AG04450 (cell line): ENCODE measurements at regions of chr1 and their contacts with region 1.

Region 1: DNA sequence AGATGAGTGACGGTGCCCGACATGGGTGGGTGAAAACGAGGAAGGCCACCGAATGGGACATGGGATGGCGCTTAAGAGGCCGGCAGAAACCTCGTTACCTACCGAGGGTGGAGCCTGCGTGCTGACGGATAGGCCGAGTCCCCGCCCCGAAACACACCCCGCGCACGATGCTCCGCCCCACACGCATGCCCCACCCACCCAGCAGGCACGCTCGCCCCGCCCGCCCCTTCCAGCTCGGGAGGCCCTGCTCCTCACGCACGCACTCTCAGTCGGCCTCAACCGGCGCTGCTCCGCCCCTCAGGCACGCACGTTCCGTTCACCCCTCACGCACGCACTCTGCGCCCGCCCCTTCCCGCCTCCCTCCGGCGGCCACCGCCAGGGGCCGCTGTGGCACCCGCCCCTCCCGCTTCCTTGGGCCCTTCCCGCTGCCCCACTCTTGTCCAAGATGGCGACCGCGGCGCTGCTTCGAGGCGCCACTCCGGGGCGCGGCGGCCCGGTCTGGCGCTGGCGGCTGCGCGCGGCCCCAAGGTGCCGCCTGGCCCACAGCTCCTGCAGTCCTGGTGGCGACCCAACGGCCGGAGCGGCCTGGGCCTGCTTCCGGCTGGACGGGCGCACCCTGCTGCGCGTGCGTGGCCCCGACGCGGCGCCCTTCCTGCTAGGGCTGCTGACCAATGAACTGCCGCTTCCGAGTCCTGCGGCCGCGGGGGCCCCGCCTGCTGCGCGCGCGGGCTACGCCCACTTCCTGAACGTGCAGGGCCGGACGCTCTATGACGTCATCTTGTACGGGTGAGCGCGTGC is at the start of gene IBA57:
- DNase-seq: peak; percentile 97
- H3K4me3 ChIP-seq: peak within 1 kb of the TSS; percentile 75
- H3K27ac ChIP-seq: peak within 1 kb of the TSS; percentile 81
- H3K27me3 ChIP-seq: no peaks in the 10 kb centered on the region
- CTCF ChIP-seq: peak; percentile 83
- polyA plus RNA-seq, gene IBA57: 1.4 and 1.7 TPM in 2 replicates

Region 2: GRCh38 chr1:228139944-228140656 is 25.5 kb before region 1 on chr1 and contains the start of gene GUK1:
- CTCF ChIA-PET with region 1: interaction called, 7 read pairs
- POLR2A ChIA-PET with region 1: interaction called, 11 read pairs
- DNase-seq: peak; percentile 97
- H3K4me3 ChIP-seq: peak within 1 kb of the TSS; percentile 90
- H3K27ac ChIP-seq: peak within 1 kb of the TSS; percentile 82
- H3K27me3 ChIP-seq: peaks cover 18% of the 10 kb centered on the region
- CTCF ChIP-seq: peak; percentile 23; the same call in 1 of the 2 replicates
- polyA plus RNA-seq, gene GUK1: 177 and 230 TPM in 2 replicates

Region 3: GRCh38 chr1:228150461-228151179 is 15.0 kb before region 1 on chr1:
- CTCF ChIA-PET with region 1: interaction called, 26 read pairs
- POLR2A ChIA-PET with region 1: interaction called, 15 read pairs
- DNase-seq: peak; percentile 65
- H3K4me3 ChIP-seq: peak overlapping the region; percentile 39
- H3K27ac ChIP-seq: peak overlapping the region; percentile 84
- H3K27me3 ChIP-seq: no peaks in the 10 kb centered on the region
- CTCF ChIP-seq: no peak

Region 4: DNA sequence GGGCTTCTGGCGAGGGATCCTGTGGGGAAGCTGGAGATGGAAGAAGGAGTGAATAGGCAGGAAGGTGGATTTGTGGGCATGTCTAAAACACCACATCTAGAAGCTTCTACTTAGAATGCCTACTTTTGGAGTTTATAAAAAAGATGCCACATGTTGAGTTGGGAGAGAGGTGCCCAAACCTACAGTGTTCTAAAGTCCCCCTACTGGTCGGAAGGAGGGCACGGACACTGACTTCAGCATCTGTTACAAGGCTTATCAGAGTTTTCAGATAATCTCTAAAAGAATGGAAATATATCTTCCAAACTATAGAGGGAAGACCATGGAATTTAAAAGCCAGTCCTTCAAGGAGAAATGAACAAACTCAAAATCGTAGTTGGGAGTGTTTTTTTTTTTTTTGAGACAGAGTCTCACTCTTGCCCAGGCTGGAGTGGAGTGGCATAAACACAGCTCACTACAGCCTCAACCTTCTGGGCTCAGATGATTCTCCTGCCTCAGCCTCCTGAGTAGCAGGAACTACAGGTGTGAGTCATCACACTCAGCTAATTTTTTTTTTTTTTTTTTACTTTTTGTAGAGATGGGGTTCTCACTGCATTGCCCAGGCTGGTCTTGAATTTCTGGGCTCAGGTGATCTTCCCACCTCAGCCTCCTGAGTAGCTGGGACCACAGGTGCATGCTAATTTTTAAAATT is 14.8 kb after region 1 on chr1:
- CTCF ChIA-PET with region 1: interaction called, 25 read pairs
- POLR2A ChIA-PET with region 1: interaction called, 8 read pairs
- DNase-seq: no peak
- H3K4me3 ChIP-seq: no peak overlapping the region
- H3K27ac ChIP-seq: peak overlapping the region; percentile 39
- H3K27me3 ChIP-seq: no peaks in the 10 kb centered on the region
- CTCF ChIP-seq: peak; percentile 30

Region 5: DNA sequence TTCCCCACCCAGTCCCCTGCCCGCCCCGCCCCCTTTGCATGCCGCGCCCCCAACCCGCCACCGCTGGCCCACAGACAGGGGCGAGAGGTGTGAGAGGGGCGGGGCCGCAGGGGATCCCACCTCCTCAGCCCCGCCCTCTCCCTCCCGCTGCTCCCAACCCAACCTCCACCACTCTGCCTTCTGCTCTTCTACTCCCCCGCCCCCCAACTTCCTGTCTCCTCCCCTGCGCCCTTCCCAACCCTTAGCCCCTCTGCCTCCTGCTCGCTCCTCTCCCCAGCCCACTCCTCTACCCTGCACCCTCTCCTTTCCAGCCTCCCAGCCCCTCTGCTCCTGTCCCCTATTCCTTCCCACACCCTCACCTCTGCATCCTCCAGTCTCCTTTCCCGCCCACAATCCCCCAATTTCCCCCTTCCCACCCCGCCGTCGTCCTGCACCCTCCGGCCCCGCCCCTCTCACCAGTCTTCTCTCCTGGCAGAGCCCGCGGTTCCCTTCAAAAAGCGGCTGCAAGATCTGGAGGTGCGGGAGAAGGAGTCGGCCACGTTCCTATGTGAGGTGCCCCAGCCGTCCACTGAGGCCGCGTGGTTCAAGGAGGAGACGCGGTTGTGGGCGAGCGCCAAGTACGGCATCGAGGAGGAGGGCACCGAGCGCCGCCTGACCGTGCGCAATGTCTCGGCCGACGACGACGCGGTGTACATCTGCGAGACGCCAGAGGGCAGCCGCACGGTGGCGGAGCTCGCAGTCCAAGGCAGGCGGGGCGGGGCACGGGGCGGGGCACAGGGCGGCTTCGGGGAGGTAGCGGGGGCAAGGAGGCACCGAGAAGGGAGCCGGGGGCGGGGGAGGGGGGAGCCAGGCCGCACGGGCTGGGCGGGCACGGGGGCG is 47.6 kb after region 1 on chr1:
- CTCF ChIA-PET with region 1: interaction called, 13 read pairs
- POLR2A ChIA-PET with region 1: no interaction called
- DNase-seq: peak; percentile 39
- H3K4me3 ChIP-seq: peak overlapping the region; percentile 73
- H3K27ac ChIP-seq: no peak overlapping the region
- H3K27me3 ChIP-seq: peaks cover 3% of the 10 kb centered on the region
- CTCF ChIP-seq: peak; percentile 52